GM12878 (cell line): ENCODE measurements at regions of chr12 and their contacts with region 1.

Region 1: GRCh38 chr12:101830367-101831325 is at the start of gene GNPTAB:
- DNase-seq: peak; percentile 80
- ATAC-seq: peak; percentile 89
- H3K4me3 ChIP-seq: peak within 1 kb of the TSS; percentile 94
- H3K27ac ChIP-seq: peak within 1 kb of the TSS; percentile 81
- H3K4me1 ChIP-seq: peaks cover 7% of the 10 kb centered on the region
- H3K27me3 ChIP-seq: no peaks in the 10 kb centered on the region
- CTCF ChIP-seq: peak; percentile 75 to 82 (median 77)
- EP300 ChIP-seq: 0 out of 4 replicates have a peak, but pooled peaks of 1 of the 2 experiments have one; percentile 22
- POLR2A ChIP-seq: peak; percentile 84
- RAD21 ChIP-seq: no peak
- polyA plus RNA-seq, gene GNPTAB: 9.8 to 10.5 TPM

Region 2: GRCh38 chr12:101414533-101415119 is 416.0 kb before region 1 on chr12:
- CTCF ChIA-PET with region 1: interaction called, 5 read pairs
- POLR2A ChIA-PET with region 1: no interaction called
- RAD21 ChIA-PET with region 1: interaction called, 6 read pairs
- SMC1A ChIA-PET with region 1: interaction called, 12 read pairs
- in situ Hi-C with region 1: loop called (anchors 5 kb)
- intact Hi-C with region 1: loop called (anchors 2 kb)
- DNase-seq: peak; percentile 13
- ATAC-seq: peak; percentile 81
- H3K4me3 ChIP-seq: no peak overlapping the region
- H3K27ac ChIP-seq: no peak overlapping the region
- H3K4me1 ChIP-seq: no peaks in the 10 kb centered on the region
- H3K27me3 ChIP-seq: no peaks in the 10 kb centered on the region
- CTCF ChIP-seq: peak; percentile 48 to 66 (median 51); a peak in 5 of 6 replicates
- EP300 ChIP-seq: no peak
- POLR2A ChIP-seq: no peak
- RAD21 ChIP-seq: peak; percentile 87

Region 3: GRCh38 chr12:101782273-101782731 is 48.3 kb before region 1 on chr12:
- CTCF ChIA-PET with region 1: interaction called, 63 read pairs
- POLR2A ChIA-PET with region 1: interaction called, 4 read pairs
- RAD21 ChIA-PET with region 1: interaction called, 14 read pairs
- SMC1A ChIA-PET with region 1: interaction called, 30 read pairs
- in situ Hi-C with region 1: loop called (anchors 10 kb)
- intact Hi-C with region 1: no loop called
- DNase-seq: no peak
- ATAC-seq: no peak; the same call in 2 of the 3 replicates
- H3K4me3 ChIP-seq: no peak overlapping the region
- H3K27ac ChIP-seq: no peak overlapping the region
- H3K4me1 ChIP-seq: no peaks in the 10 kb centered on the region
- H3K27me3 ChIP-seq: no peaks in the 10 kb centered on the region
- CTCF ChIP-seq: no peak
- EP300 ChIP-seq: no peak
- POLR2A ChIP-seq: no peak
- RAD21 ChIP-seq: no peak

Region 4: GRCh38 chr12:101850199-101850598 is 19.6 kb after region 1 on chr12:
- CTCF ChIA-PET with region 1: interaction called, 12 read pairs
- POLR2A ChIA-PET with region 1: interaction called, 3 read pairs
- RAD21 ChIA-PET with region 1: interaction called, 16 read pairs
- SMC1A ChIA-PET with region 1: interaction called, 18 read pairs
- in situ Hi-C with region 1: no loop called
- intact Hi-C with region 1: no loop called
- DNase-seq: no peak
- ATAC-seq: peak; percentile 66
- H3K4me3 ChIP-seq: no peak overlapping the region
- H3K27ac ChIP-seq: no peak overlapping the region
- H3K4me1 ChIP-seq: peaks cover 17% of the 10 kb centered on the region
- H3K27me3 ChIP-seq: no peaks in the 10 kb centered on the region
- CTCF ChIP-seq: no peak
- EP300 ChIP-seq: peak in 1 of 2 experiments; percentile 30; a peak in 2 of 4 replicates
- POLR2A ChIP-seq: no peak
- RAD21 ChIP-seq: no peak

Region 5: GRCh38 chr12:101876861-101877815 is 46.5 kb after region 1 on chr12 and contains the start of gene DRAM1:
- CTCF ChIA-PET with region 1: interaction called, 7 read pairs
- POLR2A ChIA-PET with region 1: interaction called, 3 read pairs
- RAD21 ChIA-PET with region 1: interaction called, 17 read pairs
- SMC1A ChIA-PET with region 1: interaction called, 12 read pairs
- in situ Hi-C with region 1: no loop called
- intact Hi-C with region 1: loop called (anchors 2 kb)
- DNase-seq: no peak
- ATAC-seq: peak; percentile 87
- H3K4me3 ChIP-seq: peak within 1 kb of the TSS; percentile 89
- H3K27ac ChIP-seq: peak within 1 kb of the TSS; percentile 97
- H3K4me1 ChIP-seq: peaks cover 5% of the 10 kb centered on the region
- H3K27me3 ChIP-seq: no peaks in the 10 kb centered on the region
- CTCF ChIP-seq: peak; percentile 10 to 40 (median 36); a peak in 3 of 6 replicates
- EP300 ChIP-seq: no peak
- POLR2A ChIP-seq: peak; percentile 89
- RAD21 ChIP-seq: peak; percentile 43; the same call in 1 of the 2 replicates
- polyA plus RNA-seq, gene DRAM1: 22.4 to 34.8 TPM

Region 6: DNA sequence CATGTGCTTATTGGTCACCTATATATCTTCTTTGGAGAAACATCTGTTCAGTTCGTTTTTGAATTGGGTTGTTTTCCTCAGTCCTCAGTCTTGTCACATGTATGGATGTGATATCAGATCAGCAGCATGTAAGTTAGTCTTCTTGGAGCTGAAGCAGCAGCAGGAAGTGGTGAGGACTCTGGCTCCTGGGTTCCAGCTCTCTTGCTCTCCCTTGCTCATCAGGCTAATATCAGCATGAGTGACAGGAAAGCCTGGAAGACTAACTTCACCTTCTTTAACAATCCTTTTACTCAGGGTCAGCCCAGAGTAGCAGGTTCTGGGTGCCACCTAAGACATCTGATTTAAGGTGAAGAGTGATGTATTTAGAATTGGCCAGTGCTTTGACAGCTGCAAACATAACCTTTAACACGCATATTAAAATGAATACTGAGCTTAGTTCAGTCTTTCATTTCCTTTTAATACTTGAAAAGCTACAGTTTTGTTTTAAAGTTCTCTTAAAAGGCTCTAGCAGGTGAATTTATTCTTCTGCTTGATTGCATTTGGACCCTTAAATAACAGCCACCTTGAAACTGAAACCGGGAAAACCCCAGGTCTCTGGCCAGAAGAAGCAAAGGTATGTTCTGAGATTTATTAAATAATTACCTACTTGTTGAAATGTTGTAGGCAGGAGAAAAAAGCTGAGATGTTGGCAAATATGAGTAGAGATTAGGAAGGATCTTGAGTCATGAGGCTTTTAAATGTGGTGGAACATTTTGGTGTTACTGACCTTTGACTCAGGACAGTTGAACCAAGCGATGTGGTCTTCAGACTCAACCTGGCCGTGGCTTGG is 101.1 kb after region 1 on chr12:
- CTCF ChIA-PET with region 1: interaction called, 3 read pairs
- POLR2A ChIA-PET with region 1: interaction called, 3 read pairs
- RAD21 ChIA-PET with region 1: interaction called, 10 read pairs
- SMC1A ChIA-PET with region 1: interaction called, 8 read pairs
- in situ Hi-C with region 1: no loop called
- intact Hi-C with region 1: no loop called
- DNase-seq: peak; percentile 82
- ATAC-seq: peak; percentile 26
- H3K4me3 ChIP-seq: peak overlapping the region; percentile 71
- H3K27ac ChIP-seq: peak overlapping the region; percentile 98
- H3K4me1 ChIP-seq: peaks cover 62% of the 10 kb centered on the region
- H3K27me3 ChIP-seq: no peaks in the 10 kb centered on the region
- CTCF ChIP-seq: no peak
- EP300 ChIP-seq: peak; percentile 78 to 85; a peak in 3 of 4 replicates
- POLR2A ChIP-seq: peak; percentile 74
- RAD21 ChIP-seq: no peak

Region 7: GRCh38 chr12:101951002-101951670 is 120.5 kb after region 1 on chr12:
- CTCF ChIA-PET with region 1: no interaction called
- POLR2A ChIA-PET with region 1: no interaction called
- RAD21 ChIA-PET with region 1: no interaction called
- SMC1A ChIA-PET with region 1: no interaction called
- in situ Hi-C with region 1: no loop called
- intact Hi-C with region 1: no loop called
- DNase-seq: no peak
- ATAC-seq: peak; percentile 66
- H3K4me3 ChIP-seq: no peak overlapping the region
- H3K27ac ChIP-seq: peak overlapping the region; percentile 38
- H3K4me1 ChIP-seq: peaks cover 8% of the 10 kb centered on the region; the same call in 1 of the 2 replicates
- H3K27me3 ChIP-seq: no peaks in the 10 kb centered on the region
- CTCF ChIP-seq: no peak
- EP300 ChIP-seq: no peak
- POLR2A ChIP-seq: no peak
- RAD21 ChIP-seq: no peak